Stomach (tissue), 19 donors: ENCODE measurements at regions of chr14 and their contacts with region 1.

Region 1: GRCh38 chr14:58501214-58501816 is 73.8 kb downstream of the KIAA0586 start:
- DNase-seq: peak in 1 of 2 donors; percentile 85
- H3K4me3 ChIP-seq: no peak overlapping the region
- H3K27ac ChIP-seq: no peak overlapping the region
- H3K4me1 ChIP-seq: no peaks in the 10 kb centered on the region
- H3K27me3 ChIP-seq: no peaks in the 10 kb centered on the region
- CTCF ChIP-seq: peak in 5 of 7 experiments; percentile 71 to 81 (median 74)
- EP300 ChIP-seq: no peak
- POLR2A ChIP-seq: no peak

Region 2: GRCh38 chr14:59055439-59056045 is 554.2 kb after region 1 on chr14:
- intact Hi-C with region 1: loop called (anchors 5 kb)
- DNase-seq: peak; percentile 26 to 71
- H3K4me3 ChIP-seq: no peak overlapping the region
- H3K27ac ChIP-seq: no peak overlapping the region
- H3K4me1 ChIP-seq: no peaks in the 10 kb centered on the region
- H3K27me3 ChIP-seq: no peaks in the 10 kb centered on the region
- CTCF ChIP-seq: peak in 4 of 7 experiments; percentile 59 to 69 (median 62)
- EP300 ChIP-seq: no peak
- POLR2A ChIP-seq: no peak